ENCODE measurements at regions of chr7 and their contacts with region 1.

Region 1: DNA sequence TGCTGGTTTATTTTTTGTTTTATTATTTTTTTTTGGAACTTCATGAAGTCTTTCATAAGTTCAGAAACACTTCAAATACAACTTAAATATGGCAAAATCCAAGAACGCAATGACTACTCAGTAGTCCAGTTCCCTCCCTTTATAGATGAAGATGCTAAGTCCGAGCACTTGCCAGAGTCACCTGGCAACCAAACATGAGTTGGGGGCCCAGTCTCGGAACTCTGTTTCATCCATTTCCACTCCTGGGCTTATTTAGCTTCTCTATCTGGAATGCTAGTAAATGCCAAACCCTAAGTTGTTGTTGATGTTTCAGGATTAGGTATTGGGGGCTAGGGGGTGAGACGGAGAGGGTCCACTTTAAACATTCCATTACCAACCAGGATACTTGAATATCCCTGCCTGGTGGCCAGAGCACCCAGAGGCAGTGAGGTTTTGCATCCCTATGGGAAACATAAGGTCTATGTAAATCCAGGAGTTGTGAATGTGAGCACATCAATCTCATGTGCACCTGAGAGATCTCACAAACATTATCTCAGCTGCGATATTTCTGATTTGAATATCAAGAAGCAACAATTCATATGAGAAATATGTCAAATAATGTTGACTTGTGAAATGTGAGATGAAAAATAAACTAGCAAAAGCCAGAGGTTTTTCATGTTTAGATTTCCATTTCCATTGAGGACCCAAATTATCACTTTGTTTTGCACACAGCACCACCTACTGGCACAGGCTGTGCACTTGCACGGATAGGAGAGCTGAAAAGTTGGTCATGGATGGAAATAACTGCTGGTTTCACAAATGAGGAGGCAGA is 129.3 kb downstream of the PKD1L1 start:
- DNase-seq: peak; percentile 81 to 83
- H3K4me3 ChIP-seq: no peak overlapping the region
- H3K27ac ChIP-seq: peak overlapping the region; percentile 43
- H3K4me1 ChIP-seq: peaks cover 38% of the 10 kb centered on the region
- H3K27me3 ChIP-seq: no peaks in the 10 kb centered on the region
- CTCF ChIP-seq: peak; percentile 100

Region 2: DNA sequence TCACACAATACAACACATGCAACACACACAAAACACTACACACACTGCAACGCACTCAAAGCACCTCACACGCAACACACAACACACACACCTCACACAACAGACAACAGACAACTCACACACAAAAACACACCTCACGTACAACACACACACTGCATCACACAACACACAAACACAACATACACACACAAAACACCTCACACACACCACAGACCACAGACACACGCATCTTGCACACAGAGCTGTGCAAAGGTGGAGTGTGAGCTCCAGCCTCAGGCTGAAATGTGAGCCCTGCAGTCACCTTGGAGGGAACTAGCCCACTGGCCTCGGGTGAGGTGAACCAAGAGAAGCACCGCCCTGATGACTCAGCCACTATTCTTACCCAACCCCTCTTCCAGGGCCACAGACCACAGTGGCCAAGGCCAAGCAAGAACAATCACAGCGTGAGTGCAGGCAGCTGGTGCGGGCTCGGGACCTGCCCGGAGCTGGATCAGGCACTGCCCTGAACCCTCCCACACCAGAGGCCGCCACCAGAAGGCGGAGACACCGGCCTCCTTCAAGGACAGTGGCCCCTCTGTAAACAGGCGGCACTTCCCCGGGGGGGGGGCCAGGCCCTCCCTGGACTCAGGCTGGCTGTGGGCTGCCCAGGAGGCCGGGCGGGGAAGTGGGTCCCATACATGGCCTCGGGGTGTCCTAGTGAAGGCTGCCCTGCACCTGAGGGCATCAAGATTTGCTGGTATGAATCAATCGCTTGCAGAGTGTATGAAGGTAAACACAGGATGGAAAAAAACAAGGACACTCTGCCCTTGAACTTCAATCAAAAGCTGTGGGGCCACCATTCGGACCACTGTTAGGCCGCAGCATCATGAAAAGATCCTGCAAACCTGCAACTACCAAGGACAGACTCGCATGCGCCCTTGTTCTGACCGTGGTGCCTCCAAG is 343.8 kb before region 1 on chr7:
- CTCF ChIA-PET with region 1: no interaction called
- POLR2A ChIA-PET with region 1: interaction called, 3 read pairs
- intact Hi-C with region 1: loop called (anchors 1 kb)
- DNase-seq: peak; percentile 99 to 100
- H3K4me3 ChIP-seq: peak overlapping the region; percentile 16; the same call in 1 of the 2 replicates
- H3K27ac ChIP-seq: peak overlapping the region; percentile 87
- H3K4me1 ChIP-seq: peaks cover 58% of the 10 kb centered on the region
- H3K27me3 ChIP-seq: no peaks in the 10 kb centered on the region
- CTCF ChIP-seq: no peak; the same call in 1 of the 2 replicates

Region 3: DNA sequence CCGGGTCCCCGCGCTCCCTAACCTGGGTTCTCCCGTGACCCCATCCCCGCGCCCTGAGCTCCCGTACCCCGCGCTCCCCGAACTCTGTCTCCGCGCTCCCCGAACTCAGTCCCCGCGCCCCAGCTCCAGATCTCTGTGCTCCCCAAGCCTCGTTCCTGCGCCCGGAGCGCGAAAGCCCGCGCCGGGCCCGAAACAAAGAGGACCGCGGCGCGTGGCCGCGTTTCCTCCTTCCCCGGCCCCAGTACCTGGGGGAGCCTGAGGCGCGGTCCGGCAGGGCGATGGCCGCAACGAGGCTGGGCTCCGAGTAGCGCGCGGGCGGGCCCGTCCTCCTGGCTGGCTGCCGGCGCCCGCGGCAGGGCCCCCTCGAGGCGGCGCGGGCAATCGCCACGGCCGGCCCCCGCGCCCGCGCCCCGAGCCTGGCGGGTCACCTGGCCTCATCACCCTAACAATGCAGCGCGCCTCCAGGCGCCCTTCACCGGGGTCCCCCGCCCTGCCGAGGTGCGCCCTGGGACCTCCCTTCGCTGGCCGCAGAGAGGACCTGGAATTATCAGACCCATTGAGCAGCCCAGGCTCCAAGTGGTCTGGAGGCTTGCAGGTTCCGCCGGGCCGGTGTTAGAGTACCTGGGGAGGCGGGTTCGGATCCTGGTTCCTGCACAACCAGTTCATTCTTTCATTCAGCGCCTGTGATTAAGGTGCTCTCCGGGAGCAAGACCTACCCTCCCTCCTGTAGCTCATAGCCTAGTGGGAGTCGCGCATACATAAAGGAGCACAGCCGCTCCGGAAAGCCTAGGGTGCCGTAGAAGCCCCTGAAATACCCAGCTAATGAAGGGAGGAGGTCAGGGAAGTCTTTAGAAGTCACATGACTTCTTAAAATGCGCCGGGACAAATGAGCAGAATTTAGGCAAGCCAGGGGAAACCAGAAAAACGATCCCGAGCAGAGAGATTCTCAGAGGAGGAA is 236.9 kb before region 1 on chr7 and contains the start of gene TNS3:
- CTCF ChIA-PET with region 1: interaction called, 9 read pairs
- POLR2A ChIA-PET with region 1: no interaction called
- intact Hi-C with region 1: loop called (anchors 1 kb)
- DNase-seq: peak; percentile 64 to 74
- H3K4me3 ChIP-seq: peak within 1 kb of the TSS; percentile 65
- H3K27ac ChIP-seq: peak within 1 kb of the TSS; percentile 87
- H3K4me1 ChIP-seq: peaks cover 80% of the 10 kb centered on the region
- H3K27me3 ChIP-seq: no peaks in the 10 kb centered on the region
- CTCF ChIP-seq: no peak; the same call in 1 of the 2 replicates
- total RNA-seq, gene TNS3: 111 and 143 TPM in 2 replicates

Region 4: DNA sequence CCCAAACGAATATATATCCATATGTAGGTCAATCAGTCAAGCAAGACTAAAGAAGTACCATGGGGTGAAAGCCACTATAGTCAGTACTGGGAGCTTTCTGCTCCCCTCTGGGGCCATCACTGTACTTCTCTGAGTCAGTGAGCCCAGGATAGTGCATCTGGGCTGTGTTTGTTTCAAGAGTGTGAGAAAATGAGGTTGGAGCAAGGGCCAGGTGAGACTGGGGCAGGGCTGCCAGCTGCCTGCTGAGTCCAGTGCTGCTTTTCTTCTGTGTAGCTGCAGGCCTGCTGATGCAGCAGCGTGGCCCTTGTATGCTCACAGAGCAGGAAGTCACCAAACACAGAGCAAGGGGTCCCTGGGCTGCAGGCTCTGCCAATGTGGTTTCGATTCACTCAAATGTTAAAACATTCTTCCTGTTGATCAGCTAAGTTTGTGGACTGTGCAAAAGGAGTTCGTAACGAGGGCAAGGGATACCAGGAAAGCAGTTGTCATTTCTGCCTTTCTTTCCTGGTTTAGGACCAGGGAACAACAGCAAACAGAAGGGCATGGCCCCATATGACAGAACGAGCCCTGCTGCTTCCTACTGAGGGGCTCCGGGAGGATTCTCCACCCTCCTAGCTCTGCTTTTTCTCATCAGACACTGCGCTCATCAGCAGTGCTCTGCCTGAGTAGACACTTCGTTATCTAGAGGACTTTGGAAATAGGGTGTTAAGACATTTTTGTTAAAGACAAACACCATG is 171.7 kb before region 1 on chr7:
- CTCF ChIA-PET with region 1: no interaction called
- POLR2A ChIA-PET with region 1: no interaction called
- intact Hi-C with region 1: loop called (anchors 1 kb)
- DNase-seq: no peak
- H3K4me3 ChIP-seq: no peak overlapping the region
- H3K27ac ChIP-seq: no peak overlapping the region
- H3K4me1 ChIP-seq: peaks cover 29% of the 10 kb centered on the region
- H3K27me3 ChIP-seq: no peaks in the 10 kb centered on the region
- CTCF ChIP-seq: no peak

Region 5: GRCh38 chr7:47763063-47763974 is 55.7 kb before region 1 on chr7:
- CTCF ChIA-PET with region 1: no interaction called
- POLR2A ChIA-PET with region 1: interaction called, 3 read pairs
- intact Hi-C with region 1: loop called (anchors 1 kb)
- DNase-seq: peak; percentile 82 to 100
- H3K4me3 ChIP-seq: peak overlapping the region; percentile 5; the same call in 1 of the 2 replicates
- H3K27ac ChIP-seq: peak overlapping the region; percentile 95
- H3K4me1 ChIP-seq: peaks cover 69% of the 10 kb centered on the region
- H3K27me3 ChIP-seq: no peaks in the 10 kb centered on the region
- CTCF ChIP-seq: no peak

Region 6: DNA sequence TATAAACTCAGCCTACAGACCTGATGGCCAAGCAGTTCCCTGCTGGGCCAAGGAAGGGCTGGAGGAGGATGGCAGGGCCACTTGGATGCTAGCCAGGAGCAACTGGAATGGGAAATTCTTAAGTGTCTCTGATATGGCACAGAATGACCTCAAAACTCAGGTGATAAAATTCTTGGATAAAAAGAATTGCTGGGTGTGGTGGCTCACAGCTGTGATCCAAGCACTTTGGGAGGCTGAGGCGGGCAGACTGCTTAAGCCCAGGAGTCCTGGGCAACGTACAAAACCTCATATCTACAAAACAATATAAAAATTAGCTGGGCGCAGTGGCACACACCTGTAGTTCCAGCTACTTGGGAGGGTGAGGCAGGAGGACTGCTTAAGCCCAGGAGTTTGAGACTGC is 143.3 kb after region 1 on chr7:
- CTCF ChIA-PET with region 1: no interaction called
- POLR2A ChIA-PET with region 1: no interaction called
- intact Hi-C with region 1: no loop called
- DNase-seq: no peak
- H3K4me3 ChIP-seq: no peak overlapping the region
- H3K27ac ChIP-seq: no peak overlapping the region
- H3K4me1 ChIP-seq: no peaks in the 10 kb centered on the region
- H3K27me3 ChIP-seq: no peaks in the 10 kb centered on the region
- CTCF ChIP-seq: no peak

Measured in PC-9 (cell line).